CD4-positive, alpha-beta T cell (primary cell): ENCODE measurements at regions of chr12 and their contacts with region 1.

Region 1: DNA sequence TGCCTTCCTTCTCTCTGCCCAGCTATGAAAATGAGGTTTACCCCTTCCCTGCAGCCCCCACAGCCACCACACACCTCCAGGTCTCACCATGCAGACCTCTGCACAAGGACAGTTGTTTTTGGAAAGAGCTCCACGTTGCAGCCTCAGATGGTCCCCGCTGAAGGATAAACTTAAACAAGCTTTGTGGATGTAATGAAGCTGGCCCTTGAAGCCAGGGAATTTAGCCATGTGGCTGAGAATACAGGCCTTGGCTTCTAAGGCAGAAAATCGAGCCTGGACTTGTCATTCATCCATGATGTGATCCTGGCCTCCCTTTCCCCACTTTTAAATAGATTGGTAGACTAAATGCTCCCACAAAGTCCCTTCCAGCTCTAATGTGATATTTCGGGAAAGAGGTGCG is 79.4 kb downstream of the TBX3 start:
- DNase-seq: no peak
- ATAC-seq: no peak
- H3K4me3 ChIP-seq: no peak overlapping the region
- H3K4me3 Mint-ChIP-seq: no peak overlapping the region
- H3K27ac ChIP-seq: no peak overlapping the region
- H3K27ac Mint-ChIP-seq: no peak overlapping the region
- H3K4me1 ChIP-seq: no peaks in the 10 kb centered on the region
- H3K4me1 Mint-ChIP-seq: no peaks in the 10 kb centered on the region
- H3K27me3 ChIP-seq: no peaks in the 10 kb centered on the region
- H3K27me3 Mint-ChIP-seq: no peaks in the 10 kb centered on the region
- CTCF ChIP-seq: no peak

Region 2: DNA sequence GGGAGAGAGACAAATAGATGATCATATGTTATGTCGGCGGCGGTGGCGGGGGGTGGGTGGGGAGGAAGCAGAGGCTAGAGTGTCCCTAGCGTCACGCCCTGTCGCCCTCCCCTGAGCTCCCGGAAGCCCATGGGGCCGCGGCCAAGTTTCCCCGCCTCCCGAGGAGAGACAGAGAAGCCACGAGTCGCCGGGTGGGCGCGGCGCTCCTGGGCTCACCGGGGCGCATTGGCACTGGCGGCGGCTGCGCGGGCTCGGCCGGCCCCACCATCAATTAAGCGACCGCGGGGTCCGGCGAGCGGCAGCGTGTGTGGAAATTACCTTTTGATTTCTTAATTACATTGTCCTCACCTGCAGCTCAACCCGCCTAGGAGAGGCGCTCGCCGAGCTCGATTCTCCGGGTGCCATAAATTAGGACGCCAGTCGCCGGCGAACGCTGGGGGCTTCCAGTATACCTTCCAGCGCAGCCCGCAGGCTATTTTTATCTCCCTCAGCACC is 1013.1 kb before region 1 on chr12:
- CTCF ChIA-PET with region 1: no interaction called
- POLR2A ChIA-PET with region 1: no interaction called
- intact Hi-C with region 1: loop called in 1 of 2 experiments (anchors 5 kb)
- DNase-seq: no peak
- ATAC-seq: no peak
- H3K4me3 ChIP-seq: no peak overlapping the region
- H3K4me3 Mint-ChIP-seq: no peak overlapping the region
- H3K27ac ChIP-seq: no peak overlapping the region
- H3K27ac Mint-ChIP-seq: no peak overlapping the region
- H3K4me1 ChIP-seq: peaks cover 5% of the 10 kb centered on the region
- H3K4me1 Mint-ChIP-seq: peaks cover 3% of the 10 kb centered on the region
- H3K27me3 ChIP-seq: peaks cover 18 to 20% of the 10 kb centered on the region in 2 experiments
- H3K27me3 Mint-ChIP-seq: peaks cover 69% of the 10 kb centered on the region
- CTCF ChIP-seq: no peak

Region 3: DNA sequence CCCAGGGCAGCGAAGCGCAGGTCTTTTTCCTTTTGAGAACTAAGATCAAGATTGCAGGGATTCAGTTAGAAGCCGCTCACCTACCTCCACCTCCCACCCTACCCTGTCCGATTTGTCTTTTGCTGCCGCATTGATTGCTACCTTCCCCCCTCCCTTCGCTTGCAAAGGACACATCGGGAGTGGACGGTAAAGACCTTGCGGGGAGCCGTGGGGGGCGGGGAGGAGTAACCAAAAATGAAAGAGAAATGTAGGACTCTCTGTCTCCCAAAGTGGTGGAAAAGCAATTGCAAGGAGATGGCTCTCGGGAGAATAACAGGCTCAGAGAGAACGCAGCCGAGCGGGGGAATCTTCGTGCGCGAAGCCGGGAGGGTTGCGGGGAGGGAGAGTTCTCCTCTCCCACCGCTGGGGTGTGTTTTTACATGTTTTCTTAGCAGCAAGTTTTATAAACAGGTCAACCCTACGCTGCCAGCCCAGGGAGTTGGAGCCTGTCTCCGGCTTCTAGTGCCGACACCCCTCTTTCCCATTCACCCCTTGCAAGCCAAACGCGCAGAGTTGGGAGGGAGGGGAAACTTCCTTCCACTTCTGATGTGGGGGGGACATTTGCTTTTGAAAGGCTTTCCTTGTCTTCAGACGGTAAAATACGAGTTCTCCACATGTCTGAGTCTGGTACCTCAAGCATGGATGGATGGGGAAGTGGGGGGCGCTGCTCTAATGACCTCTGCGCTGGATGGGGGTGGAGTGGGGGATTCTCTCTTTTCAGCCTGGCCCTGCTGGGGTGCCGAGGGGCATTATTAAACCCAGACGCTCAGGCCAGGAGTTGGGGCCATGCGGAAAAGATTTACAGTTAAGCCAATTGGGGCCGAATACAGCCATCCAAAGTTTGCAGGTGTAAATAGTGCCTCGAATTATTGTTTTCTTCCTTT is 88.2 kb after region 1 on chr12:
- CTCF ChIA-PET with region 1: no interaction called
- POLR2A ChIA-PET with region 1: no interaction called
- intact Hi-C with region 1: no loop called
- DNase-seq: no peak
- ATAC-seq: no peak
- H3K4me3 ChIP-seq: no peak overlapping the region
- H3K4me3 Mint-ChIP-seq: no peak overlapping the region
- H3K27ac ChIP-seq: no peak overlapping the region
- H3K27ac Mint-ChIP-seq: no peak overlapping the region
- H3K4me1 ChIP-seq: peaks cover 4% of the 10 kb centered on the region
- H3K4me1 Mint-ChIP-seq: peaks cover 5% of the 10 kb centered on the region
- H3K27me3 ChIP-seq: peaks cover 86 to 100% of the 10 kb centered on the region in 2 experiments
- H3K27me3 Mint-ChIP-seq: peaks cover 94% of the 10 kb centered on the region
- CTCF ChIP-seq: no peak